Activated CD8-positive, alpha-beta T cell treated with anti-CD3 and anti-CD28 coated beads for 36 hours (primary cell): ENCODE measurements at regions of chr5 and their contacts with region 1.

Region 1: GRCh38 chr5:134101686-134102439 is 12.6 kb upstream of the TCF7 start:
- DNase-seq: peak; percentile 82
- ATAC-seq: peak; percentile 31
- H3K4me3 Mint-ChIP-seq: no peak overlapping the region
- H3K27ac Mint-ChIP-seq: peak overlapping the region; percentile 11
- H3K4me1 Mint-ChIP-seq: peaks cover 86% of the 10 kb centered on the region
- H3K27me3 Mint-ChIP-seq: no peaks in the 10 kb centered on the region
- CTCF ChIP-seq: peak; percentile 88

Region 2: DNA sequence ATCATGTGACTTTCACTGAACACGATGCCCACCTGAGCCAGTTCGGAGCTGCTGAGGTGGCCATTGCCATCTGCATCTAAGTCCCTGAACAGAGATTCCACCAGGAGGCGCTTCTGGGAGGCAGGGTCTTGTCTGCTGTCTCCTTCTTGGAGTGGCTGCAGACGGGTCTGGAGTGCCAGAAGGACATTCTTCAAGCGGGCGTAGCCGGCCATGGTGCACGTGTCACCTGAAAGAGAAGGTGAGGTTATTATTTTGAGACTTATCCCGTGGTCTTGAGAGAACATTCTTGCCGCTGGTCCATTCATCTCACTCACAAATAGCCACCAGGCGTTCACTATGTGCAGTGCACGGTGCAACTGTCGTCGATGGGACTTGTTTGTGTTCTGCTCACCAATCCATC is 785.4 kb before region 1 on chr5:
- CTCF ChIA-PET with region 1: no interaction called
- POLR2A ChIA-PET with region 1: no interaction called
- intact Hi-C with region 1: no loop called
- DNase-seq: peak; percentile 28
- ATAC-seq: no peak
- H3K4me3 Mint-ChIP-seq: no peak overlapping the region
- H3K27ac Mint-ChIP-seq: no peak overlapping the region
- H3K4me1 Mint-ChIP-seq: peaks cover 3% of the 10 kb centered on the region
- H3K27me3 Mint-ChIP-seq: no peaks in the 10 kb centered on the region
- CTCF ChIP-seq: no peak

Region 3: GRCh38 chr5:133779828-133780475 is 321.9 kb before region 1 on chr5:
- CTCF ChIA-PET with region 1: no interaction called
- POLR2A ChIA-PET with region 1: no interaction called
- intact Hi-C with region 1: no loop called
- DNase-seq: no peak
- ATAC-seq: no peak
- H3K4me3 Mint-ChIP-seq: no peak overlapping the region
- H3K27ac Mint-ChIP-seq: no peak overlapping the region
- H3K4me1 Mint-ChIP-seq: no peaks in the 10 kb centered on the region
- H3K27me3 Mint-ChIP-seq: no peaks in the 10 kb centered on the region
- CTCF ChIP-seq: no peak

Region 4: DNA sequence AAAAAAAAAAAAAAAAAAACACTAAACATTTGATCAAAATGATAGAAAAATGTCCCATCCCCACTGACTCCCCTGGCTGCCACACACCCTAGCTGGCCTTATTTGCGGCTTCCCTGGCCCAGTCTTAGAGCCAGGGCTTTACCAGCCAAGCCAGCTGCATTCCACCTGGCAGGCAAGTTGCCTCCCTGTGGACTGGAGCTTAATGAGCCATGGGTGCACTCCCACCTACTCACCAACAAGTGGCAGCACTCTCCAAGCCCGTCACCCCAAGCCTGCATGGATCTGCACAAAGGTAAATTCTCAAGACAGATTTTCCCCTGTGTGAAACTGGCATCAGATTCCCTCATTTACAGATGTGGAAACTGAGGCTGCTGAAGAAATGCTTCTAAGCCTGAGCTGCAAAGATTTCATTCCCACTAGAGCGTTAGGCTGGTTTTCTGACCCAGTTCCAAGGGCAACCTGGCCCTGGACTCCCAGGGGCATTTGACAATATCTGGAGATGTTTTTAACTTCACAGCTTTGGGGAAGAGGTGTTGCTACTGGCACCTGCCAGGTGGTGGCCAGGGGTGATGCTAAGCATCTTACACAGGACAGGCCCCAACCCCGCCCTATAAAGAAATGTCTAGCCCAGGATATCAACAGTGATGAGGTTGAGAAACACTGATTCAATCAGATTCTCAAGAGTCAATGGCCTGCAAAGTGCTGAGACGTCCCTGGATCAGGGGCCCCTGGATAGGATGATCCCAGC is 75.2 kb before region 1 on chr5:
- CTCF ChIA-PET with region 1: interaction called, 10 read pairs
- POLR2A ChIA-PET with region 1: no interaction called
- intact Hi-C with region 1: no loop called
- DNase-seq: peak; percentile 73
- ATAC-seq: peak; percentile 99
- H3K4me3 Mint-ChIP-seq: no peak overlapping the region
- H3K27ac Mint-ChIP-seq: no peak overlapping the region
- H3K4me1 Mint-ChIP-seq: no peaks in the 10 kb centered on the region
- H3K27me3 Mint-ChIP-seq: no peaks in the 10 kb centered on the region
- CTCF ChIP-seq: peak; percentile 43

Region 5: DNA sequence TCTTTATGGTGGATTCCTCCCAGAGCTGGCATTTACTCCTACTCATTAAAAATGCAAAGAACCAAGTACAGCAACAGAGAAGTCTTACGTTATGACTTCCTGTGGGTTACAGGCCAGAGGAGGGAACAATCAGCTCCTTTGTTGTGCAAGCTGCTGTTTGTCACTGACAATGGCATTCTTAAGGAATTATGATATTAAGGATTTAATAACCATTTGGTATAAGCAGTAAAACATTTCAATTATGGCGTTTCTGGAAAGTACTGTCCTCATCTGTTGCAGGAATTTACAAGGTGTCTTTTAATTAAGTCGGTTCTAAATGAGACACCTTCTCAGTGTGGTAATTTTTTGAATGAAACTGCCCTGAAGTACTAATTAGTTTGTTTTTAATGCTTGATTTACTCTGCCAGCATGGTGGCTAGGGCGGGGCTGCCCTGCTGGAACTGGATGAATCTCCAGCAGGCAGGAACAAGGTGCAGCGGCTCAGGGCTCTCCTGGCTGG is 48.0 kb before region 1 on chr5:
- CTCF ChIA-PET with region 1: interaction called, 11 read pairs
- POLR2A ChIA-PET with region 1: interaction called, 3 read pairs
- intact Hi-C with region 1: no loop called
- DNase-seq: no peak
- ATAC-seq: peak; percentile 74
- H3K4me3 Mint-ChIP-seq: no peak overlapping the region
- H3K27ac Mint-ChIP-seq: peak overlapping the region; percentile 58
- H3K4me1 Mint-ChIP-seq: peaks cover 38% of the 10 kb centered on the region
- H3K27me3 Mint-ChIP-seq: no peaks in the 10 kb centered on the region
- CTCF ChIP-seq: no peak

Region 6: GRCh38 chr5:134070725-134071613 is 30.9 kb before region 1 on chr5:
- CTCF ChIA-PET with region 1: interaction called, 44 read pairs
- POLR2A ChIA-PET with region 1: interaction called, 16 read pairs
- intact Hi-C with region 1: loop called (anchors 5 kb)
- DNase-seq: peak; percentile 69
- ATAC-seq: peak; percentile 55
- H3K4me3 Mint-ChIP-seq: peak overlapping the region; percentile 64
- H3K27ac Mint-ChIP-seq: peak overlapping the region; percentile 89
- H3K4me1 Mint-ChIP-seq: peaks cover 65% of the 10 kb centered on the region
- H3K27me3 Mint-ChIP-seq: no peaks in the 10 kb centered on the region
- CTCF ChIP-seq: no peak

Region 7: GRCh38 chr5:134077926-134078580 is 23.8 kb before region 1 on chr5:
- CTCF ChIA-PET with region 1: interaction called, 44 read pairs
- POLR2A ChIA-PET with region 1: interaction called, 8 read pairs
- intact Hi-C with region 1: no loop called
- DNase-seq: peak; percentile 61
- ATAC-seq: peak; percentile 32
- H3K4me3 Mint-ChIP-seq: no peak overlapping the region
- H3K27ac Mint-ChIP-seq: peak overlapping the region; percentile 93
- H3K4me1 Mint-ChIP-seq: peaks cover 58% of the 10 kb centered on the region
- H3K27me3 Mint-ChIP-seq: no peaks in the 10 kb centered on the region
- CTCF ChIP-seq: no peak

Region 8: GRCh38 chr5:134086943-134087305 is 14.9 kb before region 1 on chr5:
- CTCF ChIA-PET with region 1: no interaction called
- POLR2A ChIA-PET with region 1: interaction called, 37 read pairs
- intact Hi-C with region 1: loop called (anchors 2 kb)
- DNase-seq: peak; percentile 93
- ATAC-seq: peak; percentile 82
- H3K4me3 Mint-ChIP-seq: peak overlapping the region; percentile 46
- H3K27ac Mint-ChIP-seq: peak overlapping the region; percentile 76
- H3K4me1 Mint-ChIP-seq: peaks cover 76% of the 10 kb centered on the region
- H3K27me3 Mint-ChIP-seq: no peaks in the 10 kb centered on the region
- CTCF ChIP-seq: no peak

Region 9: DNA sequence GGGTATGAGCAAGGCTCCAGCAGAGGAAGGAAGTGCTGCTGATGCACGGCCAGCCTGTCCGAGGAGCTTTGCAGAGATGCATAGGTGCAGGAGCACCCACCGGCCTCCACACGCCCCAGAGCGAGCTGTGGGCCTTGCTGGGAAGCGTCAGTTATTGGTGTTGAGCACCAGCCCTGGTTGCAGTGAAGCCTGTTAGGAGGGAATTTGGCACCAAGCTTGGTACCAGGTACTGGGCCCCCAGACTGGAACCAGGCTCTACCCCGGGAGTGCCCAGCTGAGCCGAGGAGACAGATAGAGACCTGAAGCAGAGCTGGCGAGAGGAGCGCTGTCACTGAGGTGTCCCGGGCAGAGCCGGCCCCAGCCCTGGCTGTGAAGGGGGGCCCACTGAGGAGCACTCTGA is 17.9 kb after region 1 on chr5:
- CTCF ChIA-PET with region 1: interaction called, 17 read pairs
- POLR2A ChIA-PET with region 1: no interaction called
- intact Hi-C with region 1: no loop called
- DNase-seq: no peak
- ATAC-seq: no peak
- H3K4me3 Mint-ChIP-seq: peak overlapping the region; percentile 66
- H3K27ac Mint-ChIP-seq: peak overlapping the region; percentile 89
- H3K4me1 Mint-ChIP-seq: peaks cover 82% of the 10 kb centered on the region
- H3K27me3 Mint-ChIP-seq: no peaks in the 10 kb centered on the region
- CTCF ChIP-seq: no peak

Region 10: GRCh38 chr5:134132372-134133034 is 30.6 kb after region 1 on chr5:
- CTCF ChIA-PET with region 1: no interaction called
- POLR2A ChIA-PET with region 1: no interaction called
- intact Hi-C with region 1: no loop called
- DNase-seq: peak; percentile 95
- ATAC-seq: peak; percentile 68
- H3K4me3 Mint-ChIP-seq: peak overlapping the region; percentile 54
- H3K27ac Mint-ChIP-seq: peak overlapping the region; percentile 82
- H3K4me1 Mint-ChIP-seq: peaks cover 97% of the 10 kb centered on the region
- H3K27me3 Mint-ChIP-seq: no peaks in the 10 kb centered on the region
- CTCF ChIP-seq: peak; percentile 21